Activated T-helper 2 cell treated with anti-CD3 and anti-CD28 coated beads, Interferon-gamma antibody, Interleukin-2, Interleukin-4, amounts not matched to agents 10 μg/mL and 5 μg/mL and 100 μg/mL, durations not matched to agents 14 hours and 24 hours and 36 hours (primary cell): ENCODE measurements at regions of chr17 and their contacts with region 1.

Region 1: GRCh38 chr17:8079291-8080207 is 8.0 kb downstream of the ALOX12B start:
- DNase-seq: peak; percentile 70
- H3K4me3 Mint-ChIP-seq: peak overlapping the region; percentile 86
- H3K27ac Mint-ChIP-seq: peak overlapping the region; percentile 74
- H3K4me1 Mint-ChIP-seq: peaks cover 5% of the 10 kb centered on the region
- H3K27me3 Mint-ChIP-seq: peaks cover 17% of the 10 kb centered on the region

Region 2: GRCh38 chr17:8300627-8301242 is 221.2 kb after region 1 on chr17:
- intact Hi-C with region 1: loop called (anchors 10 kb)
- DNase-seq: peak; percentile 49
- H3K4me3 Mint-ChIP-seq: no peak overlapping the region
- H3K27ac Mint-ChIP-seq: no peak overlapping the region
- H3K4me1 Mint-ChIP-seq: peaks cover 11% of the 10 kb centered on the region
- H3K27me3 Mint-ChIP-seq: no peaks in the 10 kb centered on the region